Activated CD8-positive, alpha-beta memory T cell treated with anti-CD3 and anti-CD28 coated beads, Interleukin-2, amount 10 ng/mL, durations not matched to agents 7 days and 5 days (primary cell): ENCODE measurements at regions of chr11 and their contacts with region 1.

Region 1: DNA sequence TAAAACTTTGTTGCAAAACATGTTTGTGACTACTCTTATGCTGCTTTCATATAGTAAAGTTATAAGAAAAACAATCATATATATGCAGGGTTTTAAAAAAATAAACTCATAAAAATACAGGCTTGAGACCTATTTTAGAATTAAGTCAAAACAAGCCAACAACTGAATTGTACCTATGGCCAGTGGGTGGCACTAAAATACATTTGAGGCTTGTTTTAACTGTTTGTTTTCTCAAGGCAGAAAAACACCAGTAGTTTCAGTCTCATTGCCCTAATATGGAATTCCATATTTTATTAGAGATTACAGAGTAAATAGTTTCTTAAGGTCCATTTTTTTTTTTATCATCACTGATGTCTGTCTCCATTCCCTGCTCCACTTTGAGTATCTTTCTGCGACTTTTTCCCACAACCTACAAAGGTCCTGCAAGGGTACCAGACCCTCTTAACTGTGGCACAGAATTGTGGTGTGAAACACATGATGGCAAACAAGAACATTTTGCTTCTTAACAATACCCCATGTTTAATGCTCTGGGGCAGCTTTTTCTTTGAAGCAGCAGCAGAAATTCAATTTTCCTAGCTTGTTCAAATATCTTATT is 8.5 kb upstream of the CCDC89 start:
- DNase-seq: no peak
- ATAC-seq: no peak
- H3K4me3 Mint-ChIP-seq: no peak overlapping the region
- H3K27ac Mint-ChIP-seq: no peak overlapping the region
- H3K4me1 Mint-ChIP-seq: peaks cover 35% of the 10 kb centered on the region
- H3K27me3 Mint-ChIP-seq: no peaks in the 10 kb centered on the region

Region 2: DNA sequence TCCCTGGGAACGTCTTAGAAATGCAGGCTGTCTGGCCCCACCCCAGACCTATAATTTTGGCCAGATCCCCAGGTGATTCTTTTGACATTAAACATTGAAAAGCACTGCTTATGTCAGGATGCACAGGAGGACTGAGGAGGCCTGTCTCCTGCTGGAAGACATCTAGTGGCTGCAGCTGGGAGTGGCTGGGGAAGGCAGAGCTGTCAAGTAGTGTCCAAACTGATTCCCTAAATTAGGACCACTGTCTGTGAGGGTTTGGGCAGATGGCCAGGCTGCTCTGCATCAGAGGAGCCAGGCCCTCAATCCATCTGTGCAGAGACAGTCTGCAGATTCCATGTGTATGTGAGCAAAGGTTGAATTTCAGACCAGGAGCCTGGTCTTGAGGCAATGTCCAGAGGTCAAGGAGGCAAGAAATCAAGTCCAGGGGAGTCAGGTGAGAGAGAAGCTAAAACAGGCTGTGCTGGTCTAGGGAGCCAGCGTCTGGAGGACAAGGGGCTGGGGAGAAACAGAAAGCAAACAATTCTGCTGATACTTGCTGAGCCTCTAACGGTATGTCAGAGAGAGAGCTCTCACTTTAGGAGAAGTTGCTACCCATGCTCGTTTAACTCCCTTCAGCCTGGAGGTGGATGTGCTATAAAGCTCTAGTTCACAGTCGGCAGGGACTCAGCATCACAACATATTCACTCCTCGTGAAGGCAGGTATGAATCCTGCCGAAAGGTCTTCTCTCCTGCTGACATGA is 131.8 kb after region 1 on chr11:
- CTCF ChIA-PET with region 1: interaction called, 16 read pairs
- DNase-seq: peak; percentile 51
- ATAC-seq: no peak
- H3K4me3 Mint-ChIP-seq: no peak overlapping the region
- H3K27ac Mint-ChIP-seq: peak overlapping the region; percentile 68
- H3K4me1 Mint-ChIP-seq: peaks cover 69% of the 10 kb centered on the region
- H3K27me3 Mint-ChIP-seq: no peaks in the 10 kb centered on the region